Tibial artery (tissue), 4 donors: ENCODE measurements at regions of chr2 and their contacts with region 1.

Region 1: GRCh38 chr2:50582164-50582563 is 449.8 kb downstream of the NRXN1 start:
- DNase-seq: no peak
- H3K4me3 ChIP-seq: no peak overlapping the region
- H3K27ac ChIP-seq: no peak overlapping the region
- H3K4me1 ChIP-seq: no peaks in the 10 kb centered on the region
- H3K27me3 ChIP-seq: no peaks in the 10 kb centered on the region
- CTCF ChIP-seq: no peak

Region 2: DNA sequence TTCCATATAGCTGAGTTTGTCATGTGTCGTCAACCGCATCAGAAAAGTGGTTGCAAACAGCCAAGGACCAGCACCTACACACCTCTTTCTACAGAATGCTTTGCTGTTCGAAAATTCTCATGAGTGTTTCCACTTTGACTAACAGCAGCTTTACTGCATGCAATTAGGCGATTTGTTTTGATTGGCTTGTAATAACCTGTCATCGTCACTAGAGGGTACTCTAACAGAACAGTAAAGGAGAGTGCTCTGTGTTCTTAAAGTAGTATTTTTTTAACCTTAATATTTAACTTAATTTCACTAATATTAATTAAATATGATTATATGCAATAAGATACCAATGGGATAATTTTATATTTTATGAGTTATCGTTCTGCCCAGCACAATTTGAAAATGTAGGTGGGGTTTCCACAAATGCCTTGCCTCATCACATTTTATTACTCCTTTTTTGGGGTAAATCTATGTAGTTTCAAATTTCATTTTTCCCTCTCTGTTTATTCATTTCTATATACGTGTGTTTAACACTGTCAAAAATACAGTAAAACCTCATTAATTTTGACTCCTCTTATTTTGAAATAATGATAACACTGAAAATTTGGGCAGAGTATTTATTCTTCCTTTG is 52.5 kb before region 1 on chr2:
- intact Hi-C with region 1: no loop called
- DNase-seq: no peak
- H3K4me3 ChIP-seq: no peak overlapping the region
- H3K27ac ChIP-seq: no peak overlapping the region
- H3K4me1 ChIP-seq: no peaks in the 10 kb centered on the region
- H3K27me3 ChIP-seq: peaks cover 0 to 3% of the 10 kb centered on the region in 2 donors
- CTCF ChIP-seq: peak; percentile 46 to 56

Region 3: DNA sequence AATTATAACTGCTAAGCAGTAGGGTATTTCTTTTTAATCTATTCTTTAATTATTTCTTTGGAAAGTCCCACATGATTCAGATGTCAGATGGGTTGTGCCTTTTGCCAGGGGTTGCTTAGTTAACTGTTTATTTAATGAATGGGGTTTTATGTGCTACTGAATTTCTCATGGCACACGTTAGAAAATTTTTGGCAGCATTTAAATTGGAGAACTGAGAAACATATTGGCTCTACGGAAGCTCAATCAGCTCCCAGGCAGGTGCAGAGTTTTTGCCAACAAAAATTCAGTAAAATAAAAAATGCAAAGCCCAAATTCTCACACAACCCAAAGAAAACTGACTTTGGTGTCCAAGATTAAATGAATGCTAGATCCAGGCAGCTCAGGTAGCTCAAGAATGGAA is 17.4 kb before region 1 on chr2:
- intact Hi-C with region 1: loop called (anchors 2 kb)
- DNase-seq: no peak
- H3K4me3 ChIP-seq: no peak overlapping the region
- H3K27ac ChIP-seq: no peak overlapping the region
- H3K4me1 ChIP-seq: no peaks in the 10 kb centered on the region
- H3K27me3 ChIP-seq: no peaks in the 10 kb centered on the region
- CTCF ChIP-seq: no peak